ENCODE measurements at regions of chr4 and their contacts with region 1.

Region 1: GRCh38 chr4:81351654-81352445 is 119.9 kb downstream of the RASGEF1B start:
- DNase-seq: peak; percentile 39 to 84 (median 60)
- ATAC-seq: peak; percentile 93
- H3K4me3 ChIP-seq: no peak overlapping the region
- H3K27ac ChIP-seq: no peak overlapping the region
- H3K4me1 ChIP-seq: peaks cover 0 to 4% of the 10 kb centered on the region in 2 donors
- H3K27me3 ChIP-seq: no peaks in the 10 kb centered on the region
- CTCF ChIP-seq: peak; percentile 79 to 86

Region 2: GRCh38 chr4:81069706-81070331 is 282.0 kb before region 1 on chr4:
- intact Hi-C with region 1: loop called in 1 of 2 experiments (anchors 10 kb)
- DNase-seq: peak in 3 of 4 donors; percentile 45 to 86 (median 70)
- ATAC-seq: peak; percentile 100
- H3K4me3 ChIP-seq: no peak overlapping the region
- H3K27ac ChIP-seq: no peak overlapping the region
- H3K4me1 ChIP-seq: no peaks in the 10 kb centered on the region
- H3K27me3 ChIP-seq: no peaks in the 10 kb centered on the region
- CTCF ChIP-seq: peak; percentile 80 to 86

Region 3: DNA sequence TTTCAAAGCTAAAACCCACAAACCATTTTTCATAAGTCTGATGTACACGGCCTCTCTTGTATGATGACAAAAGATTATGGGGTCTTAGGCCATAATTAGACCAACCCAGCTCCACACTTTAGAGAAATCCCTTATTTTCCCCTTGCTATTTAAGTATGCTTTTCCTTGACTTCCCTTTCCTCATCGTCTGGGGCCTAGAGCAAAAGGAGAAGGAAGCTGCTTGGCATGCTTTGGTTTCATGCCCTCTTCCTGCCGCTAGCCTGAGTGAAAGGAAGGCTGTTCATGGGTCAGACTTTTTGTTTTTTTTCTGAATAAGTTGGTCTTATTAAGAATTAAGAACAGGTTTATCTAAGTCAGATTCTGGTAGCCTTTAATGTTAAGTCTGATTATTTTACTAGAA is 130.5 kb after region 1 on chr4:
- intact Hi-C with region 1: no loop called
- DNase-seq: no peak
- ATAC-seq: peak; percentile 60
- H3K4me3 ChIP-seq: no peak overlapping the region
- H3K27ac ChIP-seq: peak overlapping the region in 1 of 2 donors; percentile 34
- H3K4me1 ChIP-seq: peaks cover 0 to 4% of the 10 kb centered on the region in 2 donors
- H3K27me3 ChIP-seq: no peaks in the 10 kb centered on the region
- CTCF ChIP-seq: no peak